CD4-positive, alpha-beta memory T cell (primary cell): ENCODE measurements at regions of chr9 and their contacts with region 1.

Region 1: DNA sequence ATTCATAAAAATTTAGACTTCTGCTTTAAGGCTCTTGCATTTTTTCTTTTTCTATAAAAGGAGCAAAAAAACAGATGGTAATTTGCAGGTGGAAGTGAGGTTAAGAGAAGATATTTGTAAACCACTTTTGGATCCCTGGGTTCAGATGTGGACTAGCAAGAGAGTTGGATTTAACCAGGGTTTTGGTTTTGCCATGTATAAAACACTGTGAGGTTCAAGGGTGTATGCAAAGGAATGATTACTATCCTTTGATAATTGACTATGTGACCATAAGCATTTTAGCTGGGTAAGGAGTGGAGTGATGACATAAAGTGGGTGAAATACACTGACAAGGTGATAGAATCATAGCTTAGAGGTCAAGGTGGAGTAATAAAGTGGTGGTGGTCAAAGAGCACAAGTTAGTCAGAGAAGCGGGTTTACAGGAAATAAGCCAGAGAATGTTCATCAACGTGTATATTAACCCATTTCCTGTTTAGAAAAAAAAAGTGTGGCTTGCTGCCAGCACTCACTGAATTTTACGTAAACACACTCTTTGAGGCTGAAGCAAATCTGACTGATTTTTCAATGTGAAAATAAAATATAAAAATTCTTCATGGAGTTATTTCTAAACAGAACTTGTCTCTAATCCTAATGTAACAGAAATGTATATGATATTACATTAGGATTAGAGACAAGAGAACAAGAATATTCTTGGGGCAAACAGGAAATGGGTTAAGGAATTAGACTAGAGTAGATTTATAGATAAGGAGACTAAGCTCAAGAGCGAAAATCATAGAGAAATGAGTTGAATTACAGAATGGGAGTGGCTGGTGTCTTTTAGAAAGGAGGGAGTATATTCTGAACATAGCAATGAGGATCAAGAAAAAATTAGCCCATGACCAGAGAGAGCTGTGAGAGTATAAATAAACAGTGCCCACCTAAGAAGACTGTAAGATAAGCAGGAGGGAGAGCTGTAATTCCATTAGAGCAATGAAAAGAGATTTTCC is 74.5 kb downstream of the CDKN2A start:
- DNase-seq: peak; percentile 51 to 79 (median 75)
- H3K4me3 ChIP-seq: peak overlapping the region in 1 of 2 donors; percentile 22
- H3K4me3 Mint-ChIP-seq: peak overlapping the region; percentile 4 to 76 (median 63)
- H3K27ac ChIP-seq: no peak overlapping the region
- H3K27ac Mint-ChIP-seq: peak overlapping the region; percentile 58 to 96 (median 85)
- H3K4me1 ChIP-seq: peaks cover 31% of the 10 kb centered on the region
- H3K4me1 Mint-ChIP-seq: peaks cover 21 to 43% (median 35%) of the 10 kb centered on the region in 4 donors
- H3K27me3 ChIP-seq: no peaks in the 10 kb centered on the region
- H3K27me3 Mint-ChIP-seq: no peaks in the 10 kb centered on the region

Region 2: DNA sequence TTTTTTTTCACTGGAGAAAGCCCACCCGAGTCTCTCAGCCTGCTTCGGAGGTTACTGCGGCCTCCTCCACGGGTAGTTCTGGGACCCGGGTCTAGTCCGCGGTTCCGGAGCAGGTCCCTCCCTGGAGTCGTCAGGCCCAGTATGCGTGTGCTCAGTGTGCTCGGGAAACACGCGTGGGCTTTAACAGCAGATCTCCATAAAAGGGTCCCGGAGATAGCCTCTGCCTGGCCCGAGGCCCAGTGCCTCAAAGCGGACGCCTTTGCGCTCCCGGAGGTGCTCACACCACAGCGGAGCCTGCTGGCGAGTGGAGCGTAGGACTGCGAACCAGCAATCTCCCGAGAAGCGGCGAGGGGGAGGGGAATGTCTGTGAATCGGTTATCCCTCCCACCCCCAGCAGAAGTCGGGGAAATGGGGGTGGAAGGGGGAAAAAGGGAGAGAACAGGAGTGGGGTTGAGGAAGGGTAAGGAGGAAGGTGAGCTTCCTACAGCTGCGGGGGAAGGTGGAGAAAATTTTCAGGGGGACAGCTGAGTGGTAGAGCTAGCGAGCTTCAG is 45.8 kb after region 1 on chr9:
- CTCF ChIA-PET with region 1: interaction called, 4 read pairs
- POLR2A ChIA-PET with region 1: interaction called, 4 read pairs
- intact Hi-C with region 1: loop called (anchors 5 kb)
- DNase-seq: peak; percentile 30 to 50 (median 34)
- H3K4me3 ChIP-seq: peak overlapping the region in 1 of 2 donors; percentile 44
- H3K4me3 Mint-ChIP-seq: peak overlapping the region; percentile 57 to 74 (median 64)
- H3K27ac ChIP-seq: no peak overlapping the region
- H3K27ac Mint-ChIP-seq: peak overlapping the region in 5 of 7 donors; percentile 57 to 81 (median 72)
- H3K4me1 ChIP-seq: peaks cover 22% of the 10 kb centered on the region
- H3K4me1 Mint-ChIP-seq: peaks cover 15 to 47% (median 27%) of the 10 kb centered on the region in 4 donors
- H3K27me3 ChIP-seq: peaks cover 69% of the 10 kb centered on the region
- H3K27me3 Mint-ChIP-seq: peaks cover 76 to 88% of the 10 kb centered on the region in 2 donors